ENCODE measurements at regions of chr7 and their contacts with region 1.

Region 1: GRCh38 chr7:102061981-102062390 is 224.7 kb upstream of the SH2B2 start:
- DNase-seq: peak; percentile 91 to 99 (median 95)
- H3K4me3 ChIP-seq: no peak overlapping the region
- H3K4me3 Mint-ChIP-seq: no peak overlapping the region
- H3K27ac ChIP-seq: peak overlapping the region; percentile 85 to 91
- H3K27ac Mint-ChIP-seq: peak overlapping the region; percentile 91 to 99 (median 96)
- H3K4me1 ChIP-seq: peaks cover 31 to 34% of the 10 kb centered on the region in 2 donors
- H3K4me1 Mint-ChIP-seq: peaks cover 35% of the 10 kb centered on the region
- H3K27me3 ChIP-seq: no peaks in the 10 kb centered on the region
- H3K27me3 Mint-ChIP-seq: no peaks in the 10 kb centered on the region
- CTCF ChIP-seq: no peak

Region 2: DNA sequence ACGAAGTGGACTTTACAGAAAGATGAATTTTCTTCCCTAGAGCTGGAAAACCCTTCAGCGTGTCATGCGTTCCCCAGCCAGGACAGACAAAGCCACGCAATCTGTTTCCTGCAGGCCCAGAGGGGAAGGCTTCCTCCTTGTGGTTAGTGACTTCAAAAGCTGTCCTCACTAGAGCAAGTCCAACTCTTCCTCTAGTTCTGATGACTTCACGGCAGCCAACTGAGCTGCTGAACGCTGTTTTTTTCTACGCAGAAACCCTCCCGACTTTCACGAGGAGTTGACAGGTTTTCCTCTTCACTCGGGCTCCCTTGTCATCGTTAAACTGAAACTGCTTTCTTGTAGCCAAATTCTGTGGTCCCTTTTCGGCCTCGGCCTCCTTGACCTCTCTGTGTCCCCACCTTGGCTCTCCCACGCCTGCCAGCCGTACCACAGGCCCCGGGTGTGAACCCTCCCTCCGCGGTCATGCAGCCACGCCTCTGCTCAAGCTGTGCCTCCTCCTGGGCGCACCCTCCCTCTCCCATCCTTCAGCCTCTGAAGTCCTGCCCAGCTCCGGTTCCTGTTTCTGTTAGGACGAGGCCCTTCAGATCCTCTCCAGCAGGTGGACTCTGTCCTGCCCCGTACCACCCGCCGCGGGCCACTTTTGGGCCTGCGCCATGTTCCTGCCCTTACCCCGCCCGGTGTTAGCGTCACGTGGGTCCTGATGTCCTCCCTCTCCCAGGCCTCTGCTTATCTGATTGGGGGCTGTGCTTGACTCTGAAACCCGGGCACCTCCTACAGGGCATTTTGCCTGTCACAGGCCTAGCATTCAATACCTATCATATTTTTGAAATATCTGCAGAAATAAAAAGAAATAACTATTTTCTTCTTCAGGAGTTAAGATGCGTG is 205.3 kb before region 1 on chr7:
- intact Hi-C with region 1: loop called in 1 of 2 experiments (anchors 5 kb)
- DNase-seq: peak; percentile 95 to 97 (median 97)
- H3K4me3 ChIP-seq: peak overlapping the region; percentile 31 to 76 (median 48)
- H3K4me3 Mint-ChIP-seq: peak overlapping the region; percentile 80 to 85
- H3K27ac ChIP-seq: peak overlapping the region; percentile 96 to 98
- H3K27ac Mint-ChIP-seq: peak overlapping the region; percentile 99 to 100 (median 100)
- H3K4me1 ChIP-seq: peaks cover 64 to 67% of the 10 kb centered on the region in 2 donors
- H3K4me1 Mint-ChIP-seq: peaks cover 76% of the 10 kb centered on the region
- H3K27me3 ChIP-seq: no peaks in the 10 kb centered on the region
- H3K27me3 Mint-ChIP-seq: peaks cover 0 to 2% (median 1%) of the 10 kb centered on the region in 3 donors
- CTCF ChIP-seq: peak; percentile 76

Region 3: DNA sequence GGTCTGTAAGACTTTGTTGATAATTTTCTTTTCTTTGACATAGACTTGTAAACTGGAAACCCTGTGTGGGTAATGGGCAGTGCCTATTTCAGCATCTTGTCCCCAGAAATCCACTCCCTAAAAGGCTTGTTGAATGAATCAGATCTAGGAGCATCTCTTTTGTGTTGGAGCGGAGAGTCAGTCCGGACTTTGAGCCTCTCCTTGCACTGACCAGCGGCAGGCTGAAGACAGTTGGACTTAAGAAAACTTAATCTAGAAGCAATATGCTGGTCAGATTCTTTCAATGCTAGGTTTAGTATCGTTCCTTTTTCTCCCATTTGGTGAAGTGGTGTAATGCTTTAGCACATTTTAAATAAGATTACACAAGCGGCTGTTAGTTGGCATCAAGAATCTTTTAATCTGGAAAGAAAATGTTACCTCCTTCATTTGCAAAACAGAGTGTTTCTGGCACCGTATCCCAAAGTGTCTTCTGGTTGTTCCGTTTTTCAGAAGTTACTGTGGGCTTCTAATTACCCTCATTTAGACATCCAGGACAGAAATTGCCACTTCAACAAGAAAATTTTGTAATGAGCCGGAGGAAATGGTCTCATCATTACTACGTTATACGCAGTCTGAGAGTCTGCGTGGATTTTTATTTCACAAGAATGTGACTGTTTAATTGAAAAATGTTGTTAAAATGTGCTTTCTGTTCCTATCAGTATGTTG is 169.9 kb before region 1 on chr7:
- intact Hi-C with region 1: loop called in 1 of 2 experiments (anchors 10 kb)
- DNase-seq: peak; percentile 78 to 91 (median 85)
- H3K4me3 ChIP-seq: peak overlapping the region in 1 of 3 experiments; percentile 2
- H3K4me3 Mint-ChIP-seq: peak overlapping the region; percentile 34 to 64
- H3K27ac ChIP-seq: peak overlapping the region; percentile 62 to 84
- H3K27ac Mint-ChIP-seq: peak overlapping the region; percentile 90 to 98 (median 93)
- H3K4me1 ChIP-seq: peaks cover 22 to 27% of the 10 kb centered on the region in 2 donors
- H3K4me1 Mint-ChIP-seq: peaks cover 42% of the 10 kb centered on the region
- H3K27me3 ChIP-seq: no peaks in the 10 kb centered on the region
- H3K27me3 Mint-ChIP-seq: peaks cover 0 to 3% (median 2%) of the 10 kb centered on the region in 3 donors
- CTCF ChIP-seq: no peak

Measured in CD14-positive monocyte (primary cell).